MCF 10A (cell line): ENCODE measurements at regions of chr1 and their contacts with region 1.

Region 1: GRCh38 chr1:214660862-214661261 is 57.9 kb downstream of the CENPF start:
- DNase-seq: peak; percentile 42
- H3K4me3 Mint-ChIP-seq: no peak overlapping the region
- H3K27ac Mint-ChIP-seq: no peak overlapping the region
- H3K4me1 Mint-ChIP-seq: peaks cover 13% of the 10 kb centered on the region
- H3K27me3 Mint-ChIP-seq: no peaks in the 10 kb centered on the region
- CTCF ChIP-seq: peak; percentile 82

Region 2: DNA sequence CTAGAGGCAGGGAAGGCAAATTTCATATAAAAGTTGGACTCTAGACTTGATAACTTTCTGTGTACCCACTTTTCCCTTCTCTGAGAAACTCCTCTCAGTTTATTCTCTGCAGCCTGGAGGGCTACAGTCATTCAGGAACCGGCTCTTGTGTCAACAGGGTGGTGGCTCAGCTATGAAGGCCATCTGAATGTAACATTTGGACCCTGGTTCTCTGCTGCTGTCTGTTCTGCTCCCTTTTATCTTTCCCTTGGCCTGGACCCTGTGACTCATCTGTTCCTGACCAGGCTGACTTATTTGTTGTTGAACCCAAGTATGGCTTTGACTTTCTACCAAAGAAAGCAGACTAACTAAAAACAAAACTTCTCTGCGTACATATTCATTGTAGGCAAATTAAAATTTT is 17.5 kb after region 1 on chr1:
- CTCF ChIA-PET with region 1: interaction called, 19 read pairs
- POLR2A ChIA-PET with region 1: no interaction called
- intact Hi-C with region 1: no loop called
- DNase-seq: peak; percentile 28
- H3K4me3 Mint-ChIP-seq: no peak overlapping the region
- H3K27ac Mint-ChIP-seq: no peak overlapping the region
- H3K4me1 Mint-ChIP-seq: no peaks in the 10 kb centered on the region
- H3K27me3 Mint-ChIP-seq: no peaks in the 10 kb centered on the region
- CTCF ChIP-seq: no peak

Region 3: GRCh38 chr1:215076318-215076717 is 415.5 kb after region 1 on chr1:
- CTCF ChIA-PET with region 1: interaction called, 18 read pairs
- POLR2A ChIA-PET with region 1: no interaction called
- intact Hi-C with region 1: loop called (anchors 2 kb)
- DNase-seq: peak; percentile 83
- H3K4me3 Mint-ChIP-seq: no peak overlapping the region
- H3K27ac Mint-ChIP-seq: peak overlapping the region; percentile 10
- H3K4me1 Mint-ChIP-seq: peaks cover 4% of the 10 kb centered on the region
- H3K27me3 Mint-ChIP-seq: no peaks in the 10 kb centered on the region
- CTCF ChIP-seq: peak; percentile 55

Region 4: GRCh38 chr1:215140135-215140534 is 479.3 kb after region 1 on chr1:
- CTCF ChIA-PET with region 1: interaction called, 208 read pairs
- POLR2A ChIA-PET with region 1: interaction called, 5 read pairs
- intact Hi-C with region 1: no loop called
- DNase-seq: no peak
- H3K4me3 Mint-ChIP-seq: no peak overlapping the region
- H3K27ac Mint-ChIP-seq: no peak overlapping the region
- H3K4me1 Mint-ChIP-seq: peaks cover 6% of the 10 kb centered on the region
- H3K27me3 Mint-ChIP-seq: no peaks in the 10 kb centered on the region
- CTCF ChIP-seq: no peak

Region 5: DNA sequence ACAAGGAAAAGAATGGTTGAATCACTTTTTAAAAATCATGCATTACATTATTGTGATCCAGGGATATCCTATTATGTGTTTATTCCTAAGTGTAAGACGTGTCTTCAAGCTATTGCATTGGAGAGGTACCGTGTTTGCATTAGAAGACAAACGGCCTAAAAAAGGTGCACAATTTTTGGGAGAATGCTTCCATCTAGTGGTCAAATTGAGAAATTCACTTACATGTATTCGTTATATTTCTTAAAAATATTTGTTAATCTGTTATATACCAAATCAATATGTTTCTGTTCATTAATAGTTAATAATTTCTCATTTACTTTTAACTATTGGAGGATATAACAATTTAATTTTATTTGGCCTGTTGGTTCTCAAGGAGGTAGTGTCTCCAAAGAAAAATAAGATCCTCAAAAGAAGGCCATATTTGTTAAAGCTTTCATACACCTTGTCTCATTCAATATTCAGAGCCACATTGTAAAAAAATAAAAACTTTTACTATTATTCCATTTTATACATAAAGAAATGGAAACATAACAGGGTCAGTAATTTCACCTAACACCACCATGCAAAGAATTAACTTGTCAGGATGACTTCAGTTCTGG is 865.8 kb after region 1 on chr1:
- CTCF ChIA-PET with region 1: interaction called, 335 read pairs
- POLR2A ChIA-PET with region 1: interaction called, 4 read pairs
- intact Hi-C with region 1: loop called (anchors 1 kb)
- DNase-seq: peak; percentile 80
- H3K4me3 Mint-ChIP-seq: no peak overlapping the region
- H3K27ac Mint-ChIP-seq: no peak overlapping the region
- H3K4me1 Mint-ChIP-seq: peaks cover 12% of the 10 kb centered on the region
- H3K27me3 Mint-ChIP-seq: no peaks in the 10 kb centered on the region
- CTCF ChIP-seq: peak; percentile 86